IMR-90 (cell line): ENCODE measurements at regions of chrX and their contacts with region 1.

Region 1: DNA sequence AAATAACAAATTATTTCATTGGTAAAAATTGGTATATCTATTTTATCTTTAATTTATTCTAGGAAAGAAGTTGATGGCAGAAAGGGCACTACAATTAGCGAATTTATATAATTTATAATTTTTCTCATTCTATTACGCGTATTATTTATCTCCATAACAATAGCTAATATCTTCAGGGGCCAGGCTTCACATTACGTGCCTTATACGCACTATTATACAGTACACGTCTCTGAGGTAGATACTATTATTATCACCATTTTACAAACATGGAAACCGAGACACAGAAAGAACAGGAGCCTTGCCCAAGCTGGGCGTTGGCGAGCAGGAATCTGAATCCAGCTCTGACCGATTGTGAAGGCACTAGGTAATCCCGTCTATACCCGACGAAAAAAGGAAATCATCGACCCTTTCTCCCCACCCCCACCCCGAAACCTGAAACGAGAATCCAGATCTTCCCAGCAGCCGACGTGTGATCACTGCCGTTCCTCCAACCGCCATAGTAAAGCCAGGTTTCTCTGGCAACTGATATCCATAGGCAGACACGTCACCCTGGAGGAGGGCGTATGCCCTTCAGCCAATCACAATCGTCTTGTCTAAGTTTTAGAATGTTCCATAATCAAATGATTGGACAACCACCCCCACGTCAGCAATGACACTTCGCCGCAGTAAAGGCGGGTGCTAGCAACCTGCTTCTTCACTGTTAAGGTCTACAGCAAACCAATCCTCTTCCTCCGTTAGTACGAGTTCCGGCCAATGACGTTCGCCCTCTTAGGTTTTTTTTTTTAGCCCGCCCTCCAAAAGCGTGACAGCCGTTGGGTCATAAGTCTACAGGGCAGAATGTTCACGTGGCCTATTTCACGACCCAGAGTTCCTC is at the start of gene MORF4L2:
- DNase-seq: peak; percentile 99
- ATAC-seq: peak; percentile 86
- H3K4me3 ChIP-seq: peak within 1 kb of the TSS; percentile 89
- H3K27ac ChIP-seq: peak within 1 kb of the TSS; percentile 100
- H3K4me1 ChIP-seq: no peaks in the 10 kb centered on the region
- H3K27me3 ChIP-seq: no peaks in the 10 kb centered on the region
- CTCF ChIP-seq: no peak
- POLR2A ChIP-seq: peak; percentile 98
- RAD21 ChIP-seq: no peak
- total RNA-seq, gene MORF4L2: 1,218 and 1,398 TPM in 2 replicates

Region 2: DNA sequence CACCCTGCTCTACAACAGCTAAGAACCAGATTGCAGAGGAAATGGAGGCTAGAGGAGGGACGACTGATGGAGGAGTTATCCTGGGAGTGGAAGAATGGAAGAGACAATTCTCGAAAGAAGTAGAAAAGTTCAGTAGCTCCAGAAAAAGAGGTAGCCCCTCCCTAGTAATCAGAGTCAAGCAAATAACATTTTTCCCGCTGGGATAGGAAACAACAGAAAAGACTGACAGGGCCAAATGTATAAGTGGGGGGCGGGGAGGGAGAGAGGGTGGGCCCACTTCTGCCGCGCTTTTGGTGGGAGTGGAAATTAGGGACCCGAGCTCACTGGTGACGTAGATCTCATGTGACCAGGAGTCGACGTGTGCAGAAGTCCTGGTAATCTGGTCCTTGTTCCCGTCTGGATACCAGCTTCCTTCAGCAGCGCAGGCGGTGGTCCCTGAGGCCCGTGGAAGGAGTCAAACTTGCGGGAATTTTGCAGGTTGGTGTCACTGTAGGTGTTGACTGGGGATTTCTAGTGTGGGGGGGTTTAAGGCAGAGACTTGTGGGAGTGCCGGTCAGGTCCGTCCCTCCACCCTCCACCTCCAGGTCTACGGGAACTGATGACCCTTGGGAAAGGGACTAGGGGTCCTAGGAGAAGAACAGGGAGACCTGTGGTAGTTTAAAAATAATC is 330.2 kb before region 1 on chrX and contains the start of gene TCEAL9:
- CTCF ChIA-PET with region 1: no interaction called
- POLR2A ChIA-PET with region 1: no interaction called
- dilution Hi-C with region 1: no loop called
- in situ Hi-C with region 1: no loop called
- intact Hi-C with region 1: no loop called
- DNase-seq: peak; percentile 83
- ATAC-seq: peak; percentile 81
- H3K4me3 ChIP-seq: peak within 1 kb of the TSS; percentile 94
- H3K27ac ChIP-seq: peak within 1 kb of the TSS; percentile 87
- H3K4me1 ChIP-seq: peaks cover 3% of the 10 kb centered on the region; the same call in 1 of the 2 replicates
- H3K27me3 ChIP-seq: no peaks in the 10 kb centered on the region
- CTCF ChIP-seq: no peak
- POLR2A ChIP-seq: peak; percentile 92
- RAD21 ChIP-seq: no peak
- total RNA-seq, gene TCEAL9: 20.3 and 94.4 TPM in 2 replicates

Region 3: GRCh38 chrX:103540145-103540544 is 146.3 kb before region 1 on chrX:
- CTCF ChIA-PET with region 1: no interaction called
- POLR2A ChIA-PET with region 1: interaction called, 12 read pairs
- dilution Hi-C with region 1: no loop called
- in situ Hi-C with region 1: no loop called
- intact Hi-C with region 1: no loop called
- DNase-seq: peak; percentile 58
- ATAC-seq: peak; percentile 72
- H3K4me3 ChIP-seq: no peak overlapping the region
- H3K27ac ChIP-seq: no peak overlapping the region
- H3K4me1 ChIP-seq: peaks cover 2% of the 10 kb centered on the region
- H3K27me3 ChIP-seq: peaks cover 6% of the 10 kb centered on the region
- CTCF ChIP-seq: no peak
- POLR2A ChIP-seq: no peak
- RAD21 ChIP-seq: no peak

Region 4: DNA sequence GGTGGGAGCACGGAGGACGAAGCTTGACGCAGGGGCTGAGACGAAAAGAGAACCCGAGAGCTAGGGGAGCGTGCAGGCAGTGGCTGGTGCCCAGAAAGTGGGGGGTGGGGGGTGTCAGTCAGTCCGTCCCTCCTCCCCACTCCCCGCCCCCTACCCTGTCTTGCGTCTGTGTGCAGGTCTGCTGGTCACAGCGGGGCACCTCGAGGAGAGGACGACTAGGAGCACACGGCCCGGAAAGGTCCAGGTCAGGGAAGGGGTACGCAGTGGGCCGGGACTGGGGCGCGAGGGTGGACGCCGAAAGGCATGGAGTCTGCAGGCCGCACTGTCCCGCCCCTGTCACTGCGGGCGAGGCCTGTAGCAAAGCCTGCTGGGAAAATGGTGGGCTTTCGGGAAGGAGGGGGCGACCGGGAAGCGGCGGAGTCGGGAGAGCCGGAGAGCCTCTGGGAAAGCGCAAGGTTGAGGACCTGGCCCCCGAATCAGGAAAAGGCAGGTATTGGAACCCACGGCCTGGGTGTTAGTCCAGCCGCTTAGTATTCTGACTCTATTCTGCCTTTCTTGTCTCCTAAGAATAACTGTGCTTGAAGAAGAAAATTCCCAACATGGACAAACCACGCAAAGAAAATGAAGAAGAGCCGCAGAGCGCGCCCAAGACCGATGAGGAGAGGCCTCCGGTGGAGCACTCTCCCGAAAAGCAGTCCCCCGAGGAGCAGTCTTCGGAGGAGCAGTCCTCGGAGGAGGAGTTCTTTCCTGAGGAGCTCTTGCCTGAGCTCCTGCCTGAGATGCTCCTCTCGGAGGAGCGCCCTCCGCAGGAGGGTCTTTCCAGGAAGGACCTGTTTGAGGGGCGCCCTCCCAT is 56.9 kb before region 1 on chrX:
- CTCF ChIA-PET with region 1: no interaction called
- POLR2A ChIA-PET with region 1: no interaction called
- dilution Hi-C with region 1: no loop called
- in situ Hi-C with region 1: no loop called
- intact Hi-C with region 1: loop called (anchors 2 kb)
- DNase-seq: peak; percentile 67
- ATAC-seq: peak; percentile 87
- H3K4me3 ChIP-seq: peak overlapping the region; percentile 81
- H3K27ac ChIP-seq: peak overlapping the region; percentile 98
- H3K4me1 ChIP-seq: no peaks in the 10 kb centered on the region
- H3K27me3 ChIP-seq: no peaks in the 10 kb centered on the region
- CTCF ChIP-seq: peak; percentile 62
- POLR2A ChIP-seq: no peak
- RAD21 ChIP-seq: peak; percentile 34; the same call in 1 of the 2 replicates

Region 5: DNA sequence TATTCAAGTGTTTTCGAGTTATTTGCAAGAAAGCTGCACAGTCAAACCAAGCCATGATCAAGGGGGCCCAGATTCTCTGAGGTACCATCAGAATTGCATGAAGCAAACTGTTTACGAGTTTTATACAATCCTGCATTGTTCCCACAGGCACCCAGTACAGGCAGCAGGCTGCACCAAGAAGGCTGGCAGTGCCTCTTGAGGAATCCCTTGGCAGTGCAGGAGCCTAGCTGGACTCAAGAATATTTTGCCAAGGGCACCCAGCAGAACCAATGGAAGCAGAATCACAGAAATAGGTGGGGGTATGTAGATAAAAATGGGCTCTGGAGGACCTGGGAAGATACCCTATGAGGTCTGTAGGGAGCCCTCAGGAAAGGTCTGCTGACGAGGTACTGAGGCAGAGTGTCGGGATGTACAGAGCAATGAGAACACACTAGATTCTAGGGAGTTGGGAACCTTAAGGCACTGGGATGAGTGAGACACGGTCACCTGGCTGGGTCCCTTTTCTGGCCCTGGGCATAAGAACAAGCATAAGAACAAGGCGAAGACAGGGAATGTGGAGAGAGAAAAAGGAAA is 87.7 kb after region 1 on chrX:
- CTCF ChIA-PET with region 1: interaction called, 3 read pairs
- POLR2A ChIA-PET with region 1: interaction called, 6 read pairs
- dilution Hi-C with region 1: no loop called
- in situ Hi-C with region 1: no loop called
- intact Hi-C with region 1: loop called (anchors 1 kb)
- DNase-seq: peak; percentile 52
- ATAC-seq: peak; percentile 90
- H3K4me3 ChIP-seq: no peak overlapping the region
- H3K27ac ChIP-seq: no peak overlapping the region
- H3K4me1 ChIP-seq: no peaks in the 10 kb centered on the region
- H3K27me3 ChIP-seq: peaks cover 32% of the 10 kb centered on the region
- CTCF ChIP-seq: peak; percentile 57
- POLR2A ChIP-seq: no peak
- RAD21 ChIP-seq: peak; percentile 64

Region 6: DNA sequence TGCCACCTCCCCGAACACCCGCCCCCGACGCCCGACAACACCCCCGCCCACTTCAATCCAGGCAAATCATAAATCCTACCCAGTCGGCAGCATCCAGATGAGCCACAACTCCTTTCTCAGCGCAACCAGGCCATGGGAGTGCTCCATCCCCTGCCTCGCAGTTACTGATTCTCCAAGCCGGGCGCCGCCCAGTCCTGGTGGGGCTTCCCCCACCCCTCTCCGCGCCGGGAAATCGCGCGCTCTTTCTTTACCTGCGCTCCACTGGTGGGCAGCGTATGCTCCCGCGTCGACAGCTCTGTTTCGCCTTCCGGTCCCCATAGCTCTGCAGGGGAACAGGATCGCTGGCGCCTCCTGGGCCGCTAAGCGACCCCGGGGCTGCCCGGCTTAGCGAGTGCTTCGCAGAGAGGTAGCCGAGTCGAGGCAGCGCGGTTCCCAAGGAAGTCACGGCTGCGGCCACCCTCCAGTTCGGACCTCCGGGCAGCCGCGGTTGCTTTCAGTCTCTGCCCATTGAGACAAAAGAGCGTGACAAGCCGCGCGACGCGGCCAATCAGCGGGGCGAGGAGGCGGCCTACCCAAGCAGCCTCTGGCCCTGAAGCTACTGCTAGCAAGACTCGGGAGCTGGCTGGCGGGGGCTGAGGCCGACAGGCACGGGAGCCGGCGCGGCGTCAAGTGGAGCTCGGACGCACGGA is 232.3 kb after region 1 on chrX:
- CTCF ChIA-PET with region 1: no interaction called
- POLR2A ChIA-PET with region 1: no interaction called
- dilution Hi-C with region 1: no loop called
- in situ Hi-C with region 1: no loop called
- intact Hi-C with region 1: loop called (anchors 5 kb)
- DNase-seq: peak; percentile 59
- ATAC-seq: peak; percentile 88
- H3K4me3 ChIP-seq: peak overlapping the region; percentile 63
- H3K27ac ChIP-seq: peak overlapping the region; percentile 50; the same call in 1 of the 2 replicates
- H3K4me1 ChIP-seq: no peaks in the 10 kb centered on the region
- H3K27me3 ChIP-seq: peaks cover 2% of the 10 kb centered on the region; the same call in 1 of the 2 replicates
- CTCF ChIP-seq: no peak; the same call in 1 of the 2 replicates
- POLR2A ChIP-seq: no peak
- RAD21 ChIP-seq: no peak

Region 7: GRCh38 chrX:104136241-104137019 is 450.0 kb after region 1 on chrX:
- CTCF ChIA-PET with region 1: no interaction called
- POLR2A ChIA-PET with region 1: no interaction called
- dilution Hi-C with region 1: no loop called
- in situ Hi-C with region 1: loop called (anchors 25 kb)
- intact Hi-C with region 1: loop called (anchors 5 kb)
- DNase-seq: peak; percentile 91
- ATAC-seq: peak; percentile 96
- H3K4me3 ChIP-seq: peak overlapping the region; percentile 73
- H3K27ac ChIP-seq: peak overlapping the region; percentile 90
- H3K4me1 ChIP-seq: peaks cover 2% of the 10 kb centered on the region; the same call in 1 of the 2 replicates
- H3K27me3 ChIP-seq: peaks cover 2% of the 10 kb centered on the region; the same call in 1 of the 2 replicates
- CTCF ChIP-seq: peak; percentile 77
- POLR2A ChIP-seq: no peak
- RAD21 ChIP-seq: peak; percentile 78